ENCODE measurements at regions of chr17 and their contacts with region 1.

Region 1: DNA sequence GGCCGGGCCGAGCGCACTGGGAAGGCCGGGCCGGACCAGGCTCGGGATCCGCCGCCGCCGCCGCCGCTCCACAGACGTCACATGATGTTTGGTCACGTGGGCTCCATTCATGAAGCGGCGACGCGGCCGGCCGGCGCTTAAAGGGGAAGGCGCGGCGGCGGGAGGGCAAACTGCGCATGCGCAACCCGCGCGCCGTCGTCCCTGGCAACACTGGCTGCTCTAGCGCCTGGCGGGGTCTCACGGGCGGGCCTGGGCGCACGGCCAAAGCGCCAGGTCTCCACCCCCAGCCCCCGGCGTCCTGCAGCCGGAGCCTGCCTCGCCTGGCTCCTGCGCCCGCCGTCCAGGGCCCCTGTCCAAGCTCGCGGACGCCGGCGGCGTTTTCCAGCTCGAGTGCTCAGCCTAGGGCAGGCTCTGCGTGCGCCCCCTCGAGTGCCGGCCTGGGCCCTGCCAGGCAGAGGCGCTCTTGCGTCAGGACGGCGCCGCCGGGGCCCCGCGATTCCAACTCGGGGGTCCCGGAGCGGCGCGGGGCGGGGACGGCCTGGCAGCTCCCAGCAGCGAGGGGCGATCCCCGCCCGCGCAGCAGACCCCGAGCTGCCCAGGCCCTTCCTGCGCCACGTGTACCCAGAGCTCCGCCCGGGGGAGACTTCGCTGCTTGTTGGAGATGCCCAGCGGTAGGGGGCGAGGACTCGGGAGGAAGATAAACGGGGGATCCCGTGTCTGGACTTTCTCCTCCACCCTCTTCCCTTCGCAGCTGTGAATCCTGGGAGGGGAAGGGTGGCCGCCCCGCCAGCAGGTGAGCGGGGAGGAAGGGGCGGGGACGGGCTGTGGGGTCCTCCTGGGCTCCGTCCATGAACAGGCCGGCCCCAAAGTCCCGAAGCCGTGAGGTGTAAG is at the start of gene MAFG:
- DNase-seq: peak; percentile 72 to 95
- H3K4me3 ChIP-seq: peak within 1 kb of the TSS; percentile 85 to 97
- H3K27ac ChIP-seq: peak within 1 kb of the TSS; percentile 92 to 93
- H3K4me1 ChIP-seq: peaks cover 22 to 42% of the 10 kb centered on the region in 2 donors
- H3K27me3 ChIP-seq: no peaks in the 10 kb centered on the region
- CTCF ChIP-seq: peak; percentile 15 to 49 (median 24)
- total RNA-seq, gene MAFG: 28.7 TPM

Region 2: DNA sequence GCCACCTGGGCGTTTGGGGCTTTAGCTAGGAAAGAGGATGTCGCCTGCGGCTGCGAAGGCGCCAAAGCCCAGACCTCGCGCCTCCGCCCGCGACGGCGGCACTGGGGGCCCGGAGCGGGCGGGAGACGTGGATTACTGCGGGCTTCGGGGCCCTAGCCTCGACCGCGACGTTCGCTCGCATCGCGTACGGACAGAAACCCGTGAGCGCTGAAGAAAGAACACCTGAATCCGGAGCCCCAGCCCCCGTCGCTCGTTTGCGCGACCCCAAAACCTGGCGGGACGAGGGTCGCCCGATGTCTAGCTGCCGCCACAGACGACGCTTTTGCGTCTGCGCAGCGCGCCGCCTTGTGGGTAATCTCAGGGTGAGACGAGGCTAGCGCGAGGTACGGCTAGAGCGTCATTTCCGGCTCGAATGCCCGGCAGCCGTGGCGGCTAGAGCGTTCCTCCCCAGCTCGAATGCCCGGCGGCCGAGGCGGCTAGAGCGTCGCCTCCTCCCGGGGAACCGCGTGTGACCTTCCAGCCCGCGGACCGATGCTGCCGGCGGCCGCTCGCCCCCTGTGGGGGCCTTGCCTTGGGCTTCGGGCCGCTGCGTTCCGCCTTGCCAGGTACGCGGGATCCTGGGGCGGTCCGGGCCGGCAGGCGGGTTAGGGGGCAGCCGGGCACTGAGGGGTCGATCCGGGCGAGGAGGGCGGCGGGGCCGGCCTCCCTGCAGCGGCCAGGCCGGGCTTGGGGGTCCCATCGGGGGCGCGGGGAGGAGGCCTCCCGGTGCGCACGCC is 224.7 kb before region 1 on chr17 and contains the start of gene MRPL12:
- intact Hi-C with region 1: loop called (anchors 2 kb)
- DNase-seq: peak; percentile 57 to 94
- H3K4me3 ChIP-seq: peak within 1 kb of the TSS; percentile 76 to 83
- H3K27ac ChIP-seq: peak within 1 kb of the TSS; percentile 87 to 96
- H3K4me1 ChIP-seq: peaks cover 19 to 20% of the 10 kb centered on the region in 2 donors
- H3K27me3 ChIP-seq: no peaks in the 10 kb centered on the region
- CTCF ChIP-seq: peak in 2 of 3 experiments; percentile 20 to 51
- total RNA-seq, gene MRPL12: 21.8 TPM

Region 3: DNA sequence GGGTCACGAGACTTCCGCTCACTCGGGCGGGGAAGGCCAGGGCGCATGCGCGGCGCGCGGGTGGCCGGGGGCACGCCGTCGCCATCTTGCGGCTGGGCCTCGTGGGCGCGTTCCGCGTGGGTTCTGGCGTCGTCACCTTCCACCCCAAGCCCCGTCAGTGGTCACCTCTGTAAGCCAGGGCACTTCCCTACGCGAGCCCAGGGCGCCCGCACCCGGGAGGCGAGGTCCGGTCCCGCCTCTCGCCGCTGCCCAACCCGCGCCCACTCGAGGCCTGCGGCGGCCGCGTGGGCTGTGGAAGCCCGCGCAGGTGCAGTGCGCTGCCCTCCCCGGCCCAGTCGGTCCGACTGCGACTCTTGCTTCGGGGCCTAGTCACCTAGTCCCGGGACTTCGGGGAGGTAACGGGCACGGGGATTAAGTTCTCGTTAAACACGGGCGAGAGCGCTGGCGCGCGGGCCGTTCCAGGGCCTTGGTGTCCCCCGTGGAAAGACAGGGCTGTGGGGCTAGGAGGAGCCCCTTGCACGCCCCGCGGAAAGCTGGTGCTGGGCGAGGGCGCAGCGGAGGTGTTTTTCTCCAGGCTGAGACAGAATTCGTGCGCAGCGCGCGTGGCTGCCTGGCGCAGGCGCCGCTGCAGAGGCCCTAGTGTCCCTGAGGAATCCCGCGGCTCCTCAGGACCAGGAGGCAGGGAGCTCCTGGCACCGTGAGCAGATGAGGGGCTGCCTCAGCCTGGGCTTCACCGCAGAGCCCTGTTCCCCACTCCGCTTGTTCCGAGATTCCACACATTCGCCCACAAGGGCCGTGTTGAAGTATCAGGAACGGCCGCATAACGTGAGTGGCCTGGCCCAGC is 56.3 kb before region 1 on chr17:
- intact Hi-C with region 1: loop called (anchors 5 kb)
- DNase-seq: peak; percentile 74 to 96
- H3K4me3 ChIP-seq: peak overlapping the region; percentile 83 to 95
- H3K27ac ChIP-seq: peak overlapping the region; percentile 96 to 99
- H3K4me1 ChIP-seq: peaks cover 18 to 32% of the 10 kb centered on the region in 2 donors
- H3K27me3 ChIP-seq: no peaks in the 10 kb centered on the region
- CTCF ChIP-seq: peak; percentile 27 to 53 (median 53)

Region 4: DNA sequence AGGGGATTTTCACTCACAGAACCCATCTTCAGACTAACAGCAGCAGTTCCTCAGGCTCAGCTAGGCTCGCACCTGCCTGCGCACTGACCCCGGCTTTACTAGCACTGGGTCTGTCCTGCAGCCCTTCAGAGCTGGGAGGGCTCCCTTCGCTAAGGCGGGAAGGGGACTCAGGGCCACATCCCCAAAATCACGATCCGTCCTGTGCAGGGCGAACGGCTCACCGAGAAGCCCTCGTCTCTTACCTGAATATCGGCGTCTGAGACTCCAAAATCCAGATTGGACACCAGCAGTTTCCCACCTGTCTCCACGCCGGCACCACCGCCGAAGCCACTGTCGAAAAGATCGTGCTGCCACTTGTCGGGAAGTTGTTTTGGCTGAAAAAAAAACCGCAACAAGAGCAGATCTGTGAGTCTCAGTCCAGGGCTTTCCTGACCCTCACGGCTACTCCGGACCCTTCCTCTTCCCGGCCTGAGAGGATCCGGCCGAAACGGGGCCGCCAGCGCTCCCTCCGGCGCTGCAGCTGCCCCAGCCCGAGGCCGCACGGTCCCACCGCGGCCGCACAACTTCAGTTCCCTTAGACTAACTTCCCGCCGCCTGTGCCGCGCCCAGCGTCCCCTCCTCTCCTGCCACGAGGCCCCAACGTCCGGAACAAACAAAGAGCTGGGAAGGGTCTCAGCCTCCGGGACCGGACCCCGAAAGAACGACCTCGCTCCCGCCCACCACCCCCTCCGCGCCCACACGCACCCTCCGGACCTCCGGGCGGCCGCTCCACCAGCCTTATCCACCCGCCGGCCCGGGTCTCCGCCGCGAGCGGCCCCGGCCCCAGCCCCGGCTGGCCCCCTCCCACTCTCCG is 37.2 kb before region 1 on chr17:
- intact Hi-C with region 1: loop called (anchors 1 kb)
- DNase-seq: peak in 1 of 2 donors; percentile 62
- H3K4me3 ChIP-seq: peak overlapping the region; percentile 80 to 96
- H3K27ac ChIP-seq: peak overlapping the region; percentile 80 to 89
- H3K4me1 ChIP-seq: peaks cover 12 to 19% of the 10 kb centered on the region in 2 donors
- H3K27me3 ChIP-seq: no peaks in the 10 kb centered on the region
- CTCF ChIP-seq: no peak

Region 5: DNA sequence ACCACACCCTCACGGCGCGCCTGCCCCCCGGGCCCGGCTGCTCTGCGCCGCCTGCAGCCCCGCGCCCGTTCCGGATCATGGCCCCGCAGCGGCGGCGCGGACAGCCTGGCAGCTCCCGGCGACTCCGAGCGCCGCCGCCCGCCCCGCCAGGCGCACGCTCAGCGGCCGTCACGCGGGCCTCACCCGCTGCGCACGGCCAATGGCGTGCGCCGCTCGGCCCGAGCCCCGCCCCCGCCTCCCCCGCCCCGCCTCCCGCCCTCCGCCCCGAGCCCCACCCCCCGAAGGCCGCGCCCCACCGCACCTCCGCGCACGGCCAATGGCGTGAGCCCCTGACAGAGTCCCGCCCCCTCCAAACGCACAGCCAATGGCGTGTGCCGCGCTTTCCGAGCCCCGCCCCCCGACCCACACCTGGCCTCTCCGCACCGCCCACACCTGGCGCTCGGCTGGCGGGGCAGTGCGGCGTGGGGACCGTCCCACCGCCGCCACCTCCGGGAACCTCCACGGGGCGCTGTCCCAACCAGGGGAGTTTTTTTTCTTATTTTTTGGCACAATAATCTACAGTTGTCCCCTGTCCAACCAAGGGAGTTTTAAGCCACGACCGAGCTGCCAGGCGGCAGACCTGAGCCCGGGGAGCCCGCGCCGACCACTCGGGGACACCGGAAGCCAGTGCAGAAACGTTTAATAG is 16.5 kb before region 1 on chr17 and contains the start of gene PCYT2:
- intact Hi-C with region 1: loop called (anchors 2 kb)
- DNase-seq: peak; percentile 47 to 92
- H3K4me3 ChIP-seq: peak within 1 kb of the TSS; percentile 88 to 89
- H3K27ac ChIP-seq: peak within 1 kb of the TSS; percentile 79 to 83
- H3K4me1 ChIP-seq: peaks cover 2 to 10% of the 10 kb centered on the region in 2 donors
- H3K27me3 ChIP-seq: no peaks in the 10 kb centered on the region
- CTCF ChIP-seq: peak in 1 of 3 experiments; percentile 9
- total RNA-seq, gene PCYT2: 81.1 TPM

Region 6: DNA sequence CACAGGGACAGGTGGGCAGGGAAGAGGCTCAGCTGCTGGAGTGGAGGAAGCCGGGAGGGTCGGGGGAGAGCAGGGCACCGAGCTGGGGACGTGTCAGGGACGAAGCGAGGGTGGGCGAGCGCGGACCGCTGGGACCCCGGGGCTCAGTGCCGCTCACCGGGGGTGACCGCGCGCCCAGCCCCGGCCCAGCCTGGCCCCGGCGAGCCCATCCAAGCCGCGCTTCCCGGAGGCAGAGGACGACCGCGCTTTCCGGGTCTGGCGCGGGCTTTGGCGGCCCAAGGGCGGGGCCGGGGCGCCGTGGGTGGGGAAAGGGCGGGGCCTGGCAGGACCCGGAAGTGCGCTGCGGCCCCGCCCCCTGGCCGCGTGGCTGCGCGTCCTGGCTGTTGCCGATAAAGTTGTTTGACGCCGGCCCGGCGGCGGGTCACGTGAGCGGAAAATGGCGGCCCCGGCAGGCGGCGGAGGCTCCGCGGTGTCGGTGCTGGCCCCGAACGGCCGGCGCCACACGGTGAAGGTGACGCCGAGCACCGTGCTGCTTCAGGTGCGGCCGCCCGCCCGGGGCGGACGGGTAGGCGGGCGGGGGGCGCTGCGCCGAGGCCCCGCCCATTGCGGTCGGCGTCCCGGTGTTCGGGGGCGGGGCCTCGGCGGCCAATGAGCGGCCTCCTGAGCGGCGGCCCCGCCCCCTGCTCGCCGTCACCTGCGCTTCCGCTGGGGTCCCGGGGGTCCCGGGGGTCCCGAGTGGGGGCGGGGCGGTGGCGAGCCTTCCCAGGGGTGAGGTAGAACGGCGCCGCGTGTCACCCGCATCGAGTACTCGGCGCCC is 49.5 kb after region 1 on chr17 and contains the start of gene ASPSCR1:
- intact Hi-C with region 1: loop called (anchors 1 kb)
- DNase-seq: peak; percentile 54 to 93
- H3K4me3 ChIP-seq: peak within 1 kb of the TSS; percentile 74 to 84
- H3K27ac ChIP-seq: peak within 1 kb of the TSS; percentile 79 to 95
- H3K4me1 ChIP-seq: peaks cover 4 to 11% of the 10 kb centered on the region in 2 donors
- H3K27me3 ChIP-seq: no peaks in the 10 kb centered on the region
- CTCF ChIP-seq: peak in 1 of 3 experiments; percentile 18
- total RNA-seq, gene ASPSCR1: 45.1 TPM

Region 7: DNA sequence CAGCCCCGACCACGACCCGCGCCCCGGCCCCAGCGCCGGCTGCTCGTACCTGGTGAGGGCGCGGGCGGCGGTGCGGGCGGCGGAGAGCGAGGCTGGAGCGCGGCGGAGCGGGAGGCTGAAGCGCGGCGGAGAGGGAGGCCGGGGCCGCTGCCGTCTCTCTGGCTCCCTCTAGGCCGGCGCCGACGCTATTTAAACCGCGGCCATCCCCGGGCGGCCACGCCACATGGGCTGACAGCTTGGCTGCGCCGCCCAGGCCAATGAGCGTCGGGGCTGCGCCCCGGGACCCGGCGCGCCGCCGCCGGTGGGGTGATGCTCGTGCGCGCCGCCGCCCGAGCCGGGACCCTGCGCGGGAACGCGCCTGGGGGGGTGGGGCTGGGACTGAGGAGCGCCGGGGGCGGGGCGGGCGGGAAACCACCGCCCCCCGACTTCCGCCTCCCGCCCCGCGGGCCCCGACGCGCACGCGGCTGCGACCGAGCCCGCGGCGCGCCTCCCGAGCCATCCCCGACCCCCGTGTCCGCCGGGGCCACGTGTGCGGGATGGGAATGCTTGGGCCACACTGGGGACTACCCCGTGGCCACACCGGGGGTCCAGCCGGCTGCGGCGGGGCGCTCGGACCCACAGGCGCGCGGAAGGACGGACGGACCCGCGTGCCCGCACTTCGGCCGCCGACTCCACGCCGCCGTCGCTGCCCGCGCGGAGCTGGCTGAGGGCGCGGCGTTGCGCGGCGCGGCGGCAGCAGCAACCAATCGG is 170.3 kb after region 1 on chr17 and contains the start of gene FASN:
- intact Hi-C with region 1: loop called (anchors 5 kb)
- DNase-seq: peak; percentile 62 to 95
- H3K4me3 ChIP-seq: peak within 1 kb of the TSS; percentile 67 to 98
- H3K27ac ChIP-seq: peak within 1 kb of the TSS; percentile 94 to 96
- H3K4me1 ChIP-seq: peaks cover 14 to 16% of the 10 kb centered on the region in 2 donors
- H3K27me3 ChIP-seq: no peaks in the 10 kb centered on the region
- CTCF ChIP-seq: peak; percentile 28 to 51 (median 41)
- total RNA-seq, gene FASN: 90.9 TPM

Measured in ascending aorta (tissue), 2 donors.